ENCODE measurements at regions of chr6 and their contacts with region 1.

Region 1: GRCh38 chr6:26122793-26123674 is 35.8 kb downstream of the HFE start:
- DNase-seq: peak; percentile 95
- H3K4me3 Mint-ChIP-seq: peak overlapping the region; percentile 95
- H3K27ac Mint-ChIP-seq: peak overlapping the region; percentile 100
- H3K4me1 Mint-ChIP-seq: peaks cover 34% of the 10 kb centered on the region
- H3K27me3 Mint-ChIP-seq: peaks cover 8% of the 10 kb centered on the region

Region 2: DNA sequence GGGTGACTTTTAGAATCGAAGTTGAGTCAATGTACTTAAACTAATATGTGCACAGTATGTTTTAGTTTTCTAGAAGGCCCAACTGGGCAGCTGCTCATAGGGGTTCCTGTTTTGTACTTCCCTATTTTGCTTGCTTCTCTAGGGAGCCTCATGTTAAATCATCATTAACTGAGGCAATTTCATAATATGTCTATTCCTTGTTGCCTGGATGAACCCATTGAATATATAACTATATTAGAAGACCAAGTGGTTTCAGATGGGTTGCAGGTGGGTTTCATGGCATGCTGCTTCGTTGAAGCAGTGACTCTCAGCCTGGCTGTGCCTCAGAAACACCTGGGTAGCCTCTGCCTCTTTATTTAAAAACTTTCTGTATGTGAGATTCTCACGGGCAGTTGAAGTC is 821.7 kb before region 1 on chr6:
- CTCF ChIA-PET with region 1: no interaction called
- POLR2A ChIA-PET with region 1: no interaction called
- intact Hi-C with region 1: no loop called
- DNase-seq: no peak
- H3K4me3 Mint-ChIP-seq: no peak overlapping the region
- H3K27ac Mint-ChIP-seq: no peak overlapping the region
- H3K4me1 Mint-ChIP-seq: no peaks in the 10 kb centered on the region
- H3K27me3 Mint-ChIP-seq: no peaks in the 10 kb centered on the region

Region 3: GRCh38 chr6:26025894-26026832 is 96.9 kb before region 1 on chr6:
- CTCF ChIA-PET with region 1: interaction called, 3 read pairs
- POLR2A ChIA-PET with region 1: interaction called, 72 read pairs
- intact Hi-C with region 1: loop called (anchors 1 kb)
- DNase-seq: peak; percentile 96
- H3K4me3 Mint-ChIP-seq: peak overlapping the region; percentile 87
- H3K27ac Mint-ChIP-seq: peak overlapping the region; percentile 91
- H3K4me1 Mint-ChIP-seq: peaks cover 53% of the 10 kb centered on the region
- H3K27me3 Mint-ChIP-seq: peaks cover 5% of the 10 kb centered on the region

Region 4: GRCh38 chr6:26065952-26066380 is 57.1 kb before region 1 on chr6:
- CTCF ChIA-PET with region 1: interaction called, 10 read pairs
- POLR2A ChIA-PET with region 1: interaction called, 12 read pairs
- intact Hi-C with region 1: no loop called
- DNase-seq: peak; percentile 65
- H3K4me3 Mint-ChIP-seq: no peak overlapping the region
- H3K27ac Mint-ChIP-seq: no peak overlapping the region
- H3K4me1 Mint-ChIP-seq: peaks cover 4% of the 10 kb centered on the region
- H3K27me3 Mint-ChIP-seq: no peaks in the 10 kb centered on the region

Region 5: GRCh38 chr6:26175428-26176181 is 52.6 kb after region 1 on chr6:
- CTCF ChIA-PET with region 1: interaction called, 4 read pairs
- POLR2A ChIA-PET with region 1: interaction called, 44 read pairs
- intact Hi-C with region 1: loop called (anchors 1 kb)
- DNase-seq: peak; percentile 63
- H3K4me3 Mint-ChIP-seq: peak overlapping the region; percentile 24
- H3K27ac Mint-ChIP-seq: peak overlapping the region; percentile 43
- H3K4me1 Mint-ChIP-seq: peaks cover 31% of the 10 kb centered on the region
- H3K27me3 Mint-ChIP-seq: no peaks in the 10 kb centered on the region

Region 6: GRCh38 chr6:26216356-26216885 is 93.4 kb after region 1 on chr6:
- CTCF ChIA-PET with region 1: interaction called, 4 read pairs
- POLR2A ChIA-PET with region 1: interaction called, 53 read pairs
- intact Hi-C with region 1: loop called (anchors 1 kb)
- DNase-seq: peak; percentile 89
- H3K4me3 Mint-ChIP-seq: no peak overlapping the region
- H3K27ac Mint-ChIP-seq: no peak overlapping the region
- H3K4me1 Mint-ChIP-seq: peaks cover 5% of the 10 kb centered on the region
- H3K27me3 Mint-ChIP-seq: no peaks in the 10 kb centered on the region

Region 7: DNA sequence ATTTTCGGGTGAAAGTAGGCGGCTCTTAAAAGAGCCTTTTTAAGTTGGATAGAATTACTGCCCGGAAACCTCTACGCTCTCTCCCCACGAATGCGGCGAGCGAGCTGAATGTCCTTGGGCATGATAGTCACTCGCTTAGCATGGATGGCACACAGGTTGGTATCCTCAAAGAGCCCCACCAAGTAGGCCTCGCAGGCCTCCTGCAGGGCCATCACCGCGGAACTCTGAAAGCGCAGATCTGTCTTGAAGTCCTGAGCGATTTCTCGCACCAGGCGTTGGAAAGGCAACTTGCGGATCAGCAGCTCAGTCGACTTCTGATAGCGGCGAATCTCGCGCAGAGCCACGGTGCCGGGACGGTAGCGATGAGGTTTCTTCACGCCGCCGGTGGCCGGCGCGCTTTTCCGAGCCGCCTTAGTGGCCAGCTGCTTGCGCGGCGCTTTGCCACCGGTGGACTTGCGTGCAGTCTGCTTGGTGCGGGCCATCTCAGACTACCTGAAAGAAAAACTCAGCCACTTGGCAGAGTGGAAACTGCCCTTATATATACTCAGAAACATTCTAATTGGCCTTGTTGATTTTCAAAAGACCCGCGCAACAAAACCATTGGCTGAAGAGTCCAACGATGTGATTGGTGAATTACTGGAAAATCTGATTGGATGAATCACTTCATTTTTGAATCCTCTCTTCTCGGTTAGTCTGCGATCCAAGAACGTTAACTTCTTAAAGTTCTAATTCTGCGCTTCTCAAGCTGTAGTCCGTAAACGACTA is 148.1 kb after region 1 on chr6:
- CTCF ChIA-PET with region 1: no interaction called
- POLR2A ChIA-PET with region 1: interaction called, 9 read pairs
- intact Hi-C with region 1: loop called (anchors 5 kb)
- DNase-seq: peak; percentile 86
- H3K4me3 Mint-ChIP-seq: no peak overlapping the region
- H3K27ac Mint-ChIP-seq: no peak overlapping the region
- H3K4me1 Mint-ChIP-seq: peaks cover 22% of the 10 kb centered on the region
- H3K27me3 Mint-ChIP-seq: peaks cover 2% of the 10 kb centered on the region

Region 8: GRCh38 chr6:26312501-26313390 is 189.7 kb after region 1 on chr6:
- CTCF ChIA-PET with region 1: no interaction called
- POLR2A ChIA-PET with region 1: no interaction called
- intact Hi-C with region 1: no loop called
- DNase-seq: peak; percentile 89
- H3K4me3 Mint-ChIP-seq: peak overlapping the region; percentile 85
- H3K27ac Mint-ChIP-seq: peak overlapping the region; percentile 82
- H3K4me1 Mint-ChIP-seq: peaks cover 42% of the 10 kb centered on the region
- H3K27me3 Mint-ChIP-seq: peaks cover 7% of the 10 kb centered on the region

Region 9: DNA sequence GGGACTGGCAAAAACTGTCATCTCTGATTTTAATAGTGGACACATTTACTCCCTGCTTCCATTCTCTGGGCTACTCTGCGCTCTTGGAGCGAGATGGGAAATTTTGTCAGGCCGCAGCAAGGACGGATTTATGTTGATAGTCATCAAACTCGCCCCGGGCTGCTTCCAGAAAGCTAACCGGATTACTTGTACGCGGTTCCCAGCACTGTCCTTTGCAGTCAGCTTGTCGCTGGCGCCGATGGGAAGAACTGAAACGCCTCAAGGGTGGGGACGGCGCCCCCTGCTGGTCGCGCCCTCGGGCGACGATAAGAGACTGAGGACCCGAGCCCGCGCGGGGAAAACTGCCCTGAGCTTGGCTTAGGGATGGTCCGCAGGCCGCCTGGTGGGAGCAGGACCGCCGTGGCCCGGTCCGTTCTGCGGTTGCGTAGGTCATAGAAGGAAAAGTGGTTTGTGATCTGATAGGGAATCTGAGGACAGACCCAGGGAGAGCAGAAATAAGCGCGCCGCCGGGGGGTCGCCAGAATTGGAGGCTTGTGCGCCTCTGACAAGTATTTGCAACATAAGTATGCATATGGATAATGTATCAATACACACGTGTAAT is 472.7 kb after region 1 on chr6:
- CTCF ChIA-PET with region 1: no interaction called
- POLR2A ChIA-PET with region 1: no interaction called
- intact Hi-C with region 1: no loop called
- DNase-seq: peak; percentile 92
- H3K4me3 Mint-ChIP-seq: no peak overlapping the region
- H3K27ac Mint-ChIP-seq: no peak overlapping the region
- H3K4me1 Mint-ChIP-seq: peaks cover 38% of the 10 kb centered on the region
- H3K27me3 Mint-ChIP-seq: peaks cover 26% of the 10 kb centered on the region

Region 10: GRCh38 chr6:26743157-26743821 is 620.3 kb after region 1 on chr6:
- CTCF ChIA-PET with region 1: no interaction called
- POLR2A ChIA-PET with region 1: no interaction called
- intact Hi-C with region 1: no loop called
- DNase-seq: no peak
- H3K4me3 Mint-ChIP-seq: no peak overlapping the region
- H3K27ac Mint-ChIP-seq: no peak overlapping the region
- H3K4me1 Mint-ChIP-seq: no peaks in the 10 kb centered on the region
- H3K27me3 Mint-ChIP-seq: peaks cover 41% of the 10 kb centered on the region

Region 11: DNA sequence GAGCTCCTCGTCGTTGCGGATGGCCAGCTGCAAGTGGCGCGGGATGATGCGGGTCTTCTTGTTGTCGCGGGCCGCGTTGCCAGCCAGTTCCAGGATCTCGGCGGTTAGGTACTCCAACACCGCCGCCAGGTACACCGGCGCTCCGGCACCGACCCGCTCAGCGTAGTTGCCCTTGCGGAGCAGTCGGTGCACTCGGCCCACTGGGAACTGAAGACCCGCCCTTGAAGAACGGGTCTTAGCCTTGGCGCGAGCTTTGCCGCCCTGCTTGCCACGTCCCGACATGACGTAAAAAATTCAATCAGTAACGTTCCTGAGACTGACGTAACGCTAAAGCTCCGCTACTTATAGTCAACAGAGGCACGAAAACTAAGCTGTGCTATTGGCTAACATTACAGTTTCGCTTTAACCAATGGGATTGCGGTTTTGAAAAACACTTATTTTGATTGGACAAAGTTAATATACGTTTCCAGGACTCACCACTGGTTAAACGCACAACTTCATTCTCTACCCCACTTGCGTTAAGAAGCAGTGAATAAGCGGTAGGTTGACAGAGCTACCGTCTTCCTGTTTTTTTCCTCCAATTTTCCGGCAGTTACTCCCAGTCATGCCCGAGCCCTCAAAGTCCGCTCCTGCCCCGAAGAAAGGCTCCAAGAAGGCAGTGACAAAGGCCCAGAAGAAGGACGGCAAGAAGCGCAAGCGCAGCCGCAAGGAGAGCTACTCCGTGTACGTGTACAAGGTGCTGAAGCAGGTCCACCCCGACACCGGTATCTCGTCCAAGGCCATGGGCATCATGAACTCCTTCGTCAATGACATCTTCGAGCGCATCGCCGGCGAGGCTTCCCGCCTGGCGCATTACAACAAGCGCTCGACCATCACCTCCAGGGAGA is 1715.3 kb after region 1 on chr6:
- CTCF ChIA-PET with region 1: no interaction called
- POLR2A ChIA-PET with region 1: interaction called, 5 read pairs
- intact Hi-C with region 1: loop called (anchors 10 kb)
- DNase-seq: peak; percentile 88
- H3K4me3 Mint-ChIP-seq: no peak overlapping the region
- H3K27ac Mint-ChIP-seq: no peak overlapping the region
- H3K4me1 Mint-ChIP-seq: peaks cover 22% of the 10 kb centered on the region
- H3K27me3 Mint-ChIP-seq: peaks cover 6% of the 10 kb centered on the region

Measured in activated CD4-positive, alpha-beta memory T cell treated with anti-CD3 and anti-CD28 coated beads for 36 hours (primary cell).